ENCODE measurements at regions of chr5 and their contacts with region 1.

Region 1: GRCh38 chr5:8577792-8578191 is 708.8 kb downstream of the MTRR start:
- DNase-seq: no peak

Region 2: DNA sequence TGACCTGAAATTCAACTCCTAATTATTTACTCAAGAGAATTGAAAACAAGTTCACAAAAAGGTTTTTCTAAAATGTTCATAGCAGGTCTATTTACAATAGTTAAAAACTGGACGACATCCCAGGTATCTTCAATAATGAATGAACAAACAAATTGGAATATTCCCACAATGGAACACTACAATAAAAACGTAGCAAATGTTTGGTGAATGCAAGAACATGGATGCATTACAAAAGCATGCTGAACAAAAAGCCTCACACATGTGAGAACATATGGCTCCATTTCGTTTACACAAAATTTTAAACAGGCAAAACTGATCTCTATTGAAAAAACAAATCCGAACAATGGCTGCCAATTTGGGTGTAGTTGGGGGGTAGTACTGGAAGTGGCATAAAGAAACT is 39.0 kb before region 1 on chr5:
- intact Hi-C with region 1: no loop called
- DNase-seq: no peak

Region 3: DNA sequence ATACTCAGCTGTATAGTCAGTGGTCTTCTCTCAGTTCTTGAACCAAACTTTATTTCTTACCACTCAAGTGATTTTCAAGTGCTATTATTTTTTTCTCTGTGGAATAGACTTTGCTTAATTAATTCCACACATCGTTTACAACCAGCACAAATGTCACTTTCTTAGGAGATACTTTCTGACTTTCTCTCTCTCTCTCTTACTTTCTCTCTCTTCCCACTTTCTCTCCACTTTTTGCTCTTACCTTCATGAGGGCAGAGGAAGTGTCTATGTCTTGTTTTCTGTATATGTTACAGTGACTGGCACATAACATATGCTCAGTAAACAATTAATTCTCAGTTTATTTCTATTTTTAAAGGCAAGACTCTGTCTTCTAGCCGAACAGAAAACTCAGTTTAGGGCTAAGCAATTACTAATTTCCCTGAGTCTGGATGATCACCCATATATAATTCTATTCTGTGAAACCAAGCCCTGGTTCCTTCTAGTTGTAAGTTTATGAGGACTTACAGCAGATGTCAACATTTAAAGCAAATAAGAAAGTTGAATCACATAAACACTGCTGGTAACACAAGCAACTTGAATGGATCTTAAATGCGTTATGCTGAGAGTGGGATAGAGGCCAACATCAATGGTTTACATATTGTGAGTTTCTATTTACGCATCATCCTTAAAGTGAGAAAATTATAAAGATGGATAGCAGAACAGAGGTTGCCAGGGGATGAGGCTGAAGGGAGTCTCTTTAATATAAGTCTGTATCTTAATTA is 82.5 kb after region 1 on chr5:
- intact Hi-C with region 1: no loop called
- DNase-seq: no peak

Region 4: DNA sequence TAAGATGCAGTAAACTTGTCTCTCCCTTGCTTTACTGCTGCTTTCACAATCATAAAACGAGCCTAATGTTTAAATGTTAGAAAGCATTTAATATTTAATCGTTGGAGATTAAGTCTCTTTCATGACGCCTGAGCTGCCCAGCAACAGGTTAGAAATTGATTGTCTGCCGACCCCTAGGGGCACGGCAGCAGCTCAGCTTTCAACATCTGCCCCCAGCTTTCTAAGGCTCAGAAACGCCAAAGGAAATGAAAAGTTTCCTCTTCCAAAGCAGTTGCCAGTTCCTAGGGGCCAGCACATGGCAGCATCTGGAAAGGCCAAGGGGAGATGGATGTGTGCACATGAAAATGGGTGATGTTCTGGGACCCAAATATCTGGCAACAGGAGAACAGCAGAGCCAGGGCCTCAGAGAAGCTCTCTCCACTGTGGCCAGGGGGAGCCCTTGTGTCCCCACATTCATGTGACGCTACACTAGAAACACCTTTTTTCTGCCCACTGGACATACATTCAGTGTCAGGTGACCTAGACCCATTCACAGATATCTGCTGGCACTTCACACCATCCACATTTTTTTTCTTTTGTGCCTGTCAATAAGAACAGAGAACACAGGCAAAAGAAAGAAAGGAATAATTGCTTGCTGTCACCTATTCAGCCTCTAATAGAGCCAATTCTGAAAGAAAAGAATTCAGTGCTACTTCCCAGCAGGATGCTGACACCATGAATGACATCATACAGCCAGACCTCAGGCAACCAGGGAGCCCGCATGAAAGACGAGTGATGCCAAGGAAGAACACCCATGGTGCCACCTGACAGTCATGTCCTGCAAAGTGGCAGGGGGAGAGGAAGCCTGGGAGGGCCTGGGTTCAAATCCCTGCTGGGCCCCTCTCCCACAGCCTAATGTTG is 1257.3 kb after region 1 on chr5:
- intact Hi-C with region 1: loop called in 1 of 2 experiments (anchors 5 kb)
- DNase-seq: no peak

Region 5: GRCh38 chr5:10140195-10140973 is 1562.6 kb after region 1 on chr5:
- intact Hi-C with region 1: loop called in 1 of 2 experiments (anchors 5 kb)
- DNase-seq: no peak

Measured in posterior vena cava (tissue), 2 donors.